Ascending aorta (tissue), 2 donors: ENCODE measurements at regions of chr10 and their contacts with region 1.

Region 1: GRCh38 chr10:4353964-4354363 is 472.0 kb upstream of the AKR1E2 start:
- DNase-seq: no peak
- H3K4me3 ChIP-seq: peak overlapping the region in 1 of 2 donors; percentile 25
- H3K27ac ChIP-seq: peak overlapping the region; percentile 68 to 76
- H3K4me1 ChIP-seq: peaks cover 7 to 36% of the 10 kb centered on the region in 2 donors
- H3K27me3 ChIP-seq: no peaks in the 10 kb centered on the region
- CTCF ChIP-seq: no peak

Region 2: GRCh38 chr10:4429571-4429970 is 75.6 kb after region 1 on chr10:
- intact Hi-C with region 1: no loop called
- DNase-seq: no peak
- H3K4me3 ChIP-seq: no peak overlapping the region
- H3K27ac ChIP-seq: no peak overlapping the region
- H3K4me1 ChIP-seq: peaks cover 0 to 3% of the 10 kb centered on the region in 2 donors
- H3K27me3 ChIP-seq: no peaks in the 10 kb centered on the region
- CTCF ChIP-seq: no peak

Region 3: DNA sequence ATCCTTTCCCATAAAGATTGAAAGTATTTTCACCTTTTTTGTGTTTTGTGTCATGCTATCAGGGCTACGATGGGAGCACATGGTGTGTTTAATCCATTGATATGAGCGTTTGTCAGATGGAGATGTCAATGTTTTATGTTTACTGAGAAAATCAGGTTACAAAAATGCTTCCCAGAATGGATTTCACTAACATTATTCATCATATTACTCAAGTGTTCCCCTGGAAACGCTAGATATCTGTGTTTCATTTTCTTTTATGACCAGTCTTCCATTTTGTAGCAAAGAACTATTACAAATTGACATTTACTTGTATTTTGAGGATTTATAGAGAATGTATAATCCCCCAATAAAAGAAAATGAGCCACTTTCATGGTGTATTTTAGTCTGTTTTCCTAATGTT is 178.5 kb after region 1 on chr10:
- intact Hi-C with region 1: loop called (anchors 5 kb)
- DNase-seq: no peak
- H3K4me3 ChIP-seq: no peak overlapping the region
- H3K27ac ChIP-seq: peak overlapping the region; percentile 22 to 42
- H3K4me1 ChIP-seq: peaks cover 0 to 4% of the 10 kb centered on the region in 2 donors
- H3K27me3 ChIP-seq: no peaks in the 10 kb centered on the region
- CTCF ChIP-seq: no peak

Region 4: GRCh38 chr10:4656576-4657182 is 302.7 kb after region 1 on chr10:
- intact Hi-C with region 1: loop called (anchors 5 kb)
- DNase-seq: peak in 1 of 2 donors; percentile 70
- H3K4me3 ChIP-seq: no peak overlapping the region
- H3K27ac ChIP-seq: no peak overlapping the region
- H3K4me1 ChIP-seq: peaks cover 0 to 8% of the 10 kb centered on the region in 2 donors
- H3K27me3 ChIP-seq: no peaks in the 10 kb centered on the region
- CTCF ChIP-seq: peak; percentile 84 to 91 (median 84)

Region 5: GRCh38 chr10:4691776-4692175 is 337.8 kb after region 1 on chr10:
- intact Hi-C with region 1: no loop called
- DNase-seq: no peak
- H3K4me3 ChIP-seq: no peak overlapping the region
- H3K27ac ChIP-seq: no peak overlapping the region
- H3K4me1 ChIP-seq: no peaks in the 10 kb centered on the region
- H3K27me3 ChIP-seq: no peaks in the 10 kb centered on the region
- CTCF ChIP-seq: no peak